ENCODE measurements at regions of chr2 and their contacts with region 1.

Region 1: GRCh38 chr2:157492189-157492773 is 48.4 kb upstream of the CYTIP start:
- DNase-seq: peak; percentile 81
- ATAC-seq: peak; percentile 96
- H3K4me3 ChIP-seq: no peak overlapping the region
- H3K4me3 Mint-ChIP-seq: no peak overlapping the region
- H3K27ac ChIP-seq: no peak overlapping the region
- H3K27ac Mint-ChIP-seq: no peak overlapping the region
- H3K4me1 ChIP-seq: peaks cover 6 to 14% of the 10 kb centered on the region in 2 donors
- H3K4me1 Mint-ChIP-seq: peaks cover 20% of the 10 kb centered on the region
- H3K27me3 ChIP-seq: no peaks in the 10 kb centered on the region
- H3K27me3 Mint-ChIP-seq: no peaks in the 10 kb centered on the region
- CTCF ChIP-seq: peak; percentile 91

Region 2: DNA sequence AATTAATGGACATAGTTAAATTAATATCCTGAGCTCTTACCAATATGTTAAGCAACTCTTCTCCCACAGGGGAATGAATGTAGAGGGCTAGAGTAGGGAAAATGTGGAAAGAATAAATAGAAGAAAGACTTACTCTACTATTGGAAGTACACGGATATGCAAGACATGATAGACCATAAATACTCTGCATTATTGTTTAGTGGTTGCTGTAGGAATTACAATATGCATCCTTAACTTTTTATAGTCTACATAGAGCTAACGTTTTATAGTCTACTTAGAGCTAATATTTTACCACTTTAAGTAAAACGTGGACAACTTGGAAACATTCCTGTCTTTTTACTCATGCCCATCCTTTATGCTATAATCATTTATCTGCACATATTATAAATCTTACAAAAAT is 398.6 kb before region 1 on chr2:
- CTCF ChIA-PET with region 1: no interaction called
- POLR2A ChIA-PET with region 1: no interaction called
- intact Hi-C with region 1: no loop called
- DNase-seq: no peak
- ATAC-seq: no peak
- H3K4me3 ChIP-seq: no peak overlapping the region
- H3K4me3 Mint-ChIP-seq: no peak overlapping the region
- H3K27ac ChIP-seq: no peak overlapping the region
- H3K27ac Mint-ChIP-seq: no peak overlapping the region
- H3K4me1 ChIP-seq: no peaks in the 10 kb centered on the region
- H3K4me1 Mint-ChIP-seq: no peaks in the 10 kb centered on the region
- H3K27me3 ChIP-seq: no peaks in the 10 kb centered on the region
- H3K27me3 Mint-ChIP-seq: no peaks in the 10 kb centered on the region
- CTCF ChIP-seq: no peak

Region 3: GRCh38 chr2:157443795-157444640 is 48.3 kb before region 1 on chr2 and contains the start of gene CYTIP:
- CTCF ChIA-PET with region 1: interaction called, 17 read pairs
- POLR2A ChIA-PET with region 1: interaction called, 4 read pairs
- intact Hi-C with region 1: loop called (anchors 1 kb)
- DNase-seq: peak; percentile 88
- ATAC-seq: peak; percentile 58
- H3K4me3 ChIP-seq: peak within 1 kb of the TSS; percentile 82 to 98 (median 92)
- H3K4me3 Mint-ChIP-seq: peak within 1 kb of the TSS; percentile 94
- H3K27ac ChIP-seq: peak within 1 kb of the TSS; percentile 93 to 96
- H3K27ac Mint-ChIP-seq: peak within 1 kb of the TSS; percentile 95
- H3K4me1 ChIP-seq: peaks cover 40 to 43% of the 10 kb centered on the region in 2 donors
- H3K4me1 Mint-ChIP-seq: peaks cover 39% of the 10 kb centered on the region
- H3K27me3 ChIP-seq: no peaks in the 10 kb centered on the region
- H3K27me3 Mint-ChIP-seq: no peaks in the 10 kb centered on the region
- CTCF ChIP-seq: no peak
- total RNA-seq, gene CYTIP: 327 and 358 TPM in 2 replicates

Region 4: GRCh38 chr2:157559061-157559460 is 66.8 kb after region 1 on chr2:
- CTCF ChIA-PET with region 1: no interaction called
- POLR2A ChIA-PET with region 1: no interaction called
- intact Hi-C with region 1: no loop called
- DNase-seq: no peak
- ATAC-seq: no peak
- H3K4me3 ChIP-seq: no peak overlapping the region
- H3K4me3 Mint-ChIP-seq: no peak overlapping the region
- H3K27ac ChIP-seq: no peak overlapping the region
- H3K27ac Mint-ChIP-seq: no peak overlapping the region
- H3K4me1 ChIP-seq: no peaks in the 10 kb centered on the region
- H3K4me1 Mint-ChIP-seq: peaks cover 10% of the 10 kb centered on the region
- H3K27me3 ChIP-seq: no peaks in the 10 kb centered on the region
- H3K27me3 Mint-ChIP-seq: peaks cover 9% of the 10 kb centered on the region
- CTCF ChIP-seq: no peak

Region 5: DNA sequence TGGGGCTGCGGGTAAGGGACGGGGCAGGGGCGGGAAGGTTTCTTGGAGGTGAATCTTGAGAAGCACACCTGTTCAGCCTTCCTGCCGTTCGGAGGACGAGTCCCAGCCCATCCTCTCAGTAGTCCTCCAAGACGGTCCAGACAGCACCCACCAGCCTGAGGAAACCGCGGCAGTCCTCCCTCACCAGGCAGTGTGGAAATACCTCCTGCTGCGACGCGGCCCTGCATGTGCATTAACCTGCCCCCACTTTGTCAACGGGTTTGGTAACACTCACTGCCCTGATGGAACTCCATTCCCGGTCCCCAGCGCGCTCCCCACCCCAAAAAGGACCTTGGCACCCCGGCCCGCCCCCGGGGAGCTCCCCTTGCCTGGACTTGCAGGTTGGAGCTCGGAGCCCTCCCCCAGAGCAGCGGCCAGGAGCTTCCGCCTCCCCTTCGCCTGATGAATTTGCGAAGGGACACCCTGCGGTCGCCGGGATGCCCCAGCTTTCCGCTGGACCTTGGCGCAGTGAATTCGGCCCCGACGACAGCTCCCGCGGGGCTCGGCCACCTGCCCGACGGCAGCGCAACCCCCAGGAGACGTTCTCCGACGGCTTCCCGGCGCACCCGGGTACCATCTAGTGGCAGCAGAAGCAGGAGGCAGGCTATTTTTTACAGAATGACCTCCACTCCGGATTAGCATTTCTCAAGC is 104.9 kb after region 1 on chr2:
- CTCF ChIA-PET with region 1: interaction called, 105 read pairs
- POLR2A ChIA-PET with region 1: no interaction called
- intact Hi-C with region 1: loop called (anchors 1 kb)
- DNase-seq: peak; percentile 67
- ATAC-seq: peak; percentile 84
- H3K4me3 ChIP-seq: peak overlapping the region in 3 of 5 experiments; percentile 6 to 42 (median 27)
- H3K4me3 Mint-ChIP-seq: peak overlapping the region; percentile 66
- H3K27ac ChIP-seq: no peak overlapping the region
- H3K27ac Mint-ChIP-seq: no peak overlapping the region
- H3K4me1 ChIP-seq: peaks cover 0 to 4% of the 10 kb centered on the region in 2 donors
- H3K4me1 Mint-ChIP-seq: peaks cover 7% of the 10 kb centered on the region
- H3K27me3 ChIP-seq: peaks cover 0 to 8% (median 2%) of the 10 kb centered on the region in 4 experiments
- H3K27me3 Mint-ChIP-seq: peaks cover 16% of the 10 kb centered on the region
- CTCF ChIP-seq: peak; percentile 75

Region 6: GRCh38 chr2:157876066-157876787 is 383.9 kb after region 1 on chr2 and contains the start of gene ACVR1:
- CTCF ChIA-PET with region 1: interaction called, 4 read pairs
- POLR2A ChIA-PET with region 1: no interaction called
- intact Hi-C with region 1: loop called (anchors 2 kb)
- DNase-seq: peak; percentile 85
- ATAC-seq: peak; percentile 77
- H3K4me3 ChIP-seq: peak within 1 kb of the TSS; percentile 56 to 81 (median 75)
- H3K4me3 Mint-ChIP-seq: peak within 1 kb of the TSS; percentile 95
- H3K27ac ChIP-seq: peak within 1 kb of the TSS; percentile 30 to 68
- H3K27ac Mint-ChIP-seq: peak within 1 kb of the TSS; percentile 91
- H3K4me1 ChIP-seq: peaks cover 14 to 20% of the 10 kb centered on the region in 2 donors
- H3K4me1 Mint-ChIP-seq: peaks cover 24% of the 10 kb centered on the region
- H3K27me3 ChIP-seq: no peaks in the 10 kb centered on the region
- H3K27me3 Mint-ChIP-seq: no peaks in the 10 kb centered on the region
- CTCF ChIP-seq: peak; percentile 45
- total RNA-seq, gene ACVR1: 11.3 and 11.7 TPM in 2 replicates

Region 7: DNA sequence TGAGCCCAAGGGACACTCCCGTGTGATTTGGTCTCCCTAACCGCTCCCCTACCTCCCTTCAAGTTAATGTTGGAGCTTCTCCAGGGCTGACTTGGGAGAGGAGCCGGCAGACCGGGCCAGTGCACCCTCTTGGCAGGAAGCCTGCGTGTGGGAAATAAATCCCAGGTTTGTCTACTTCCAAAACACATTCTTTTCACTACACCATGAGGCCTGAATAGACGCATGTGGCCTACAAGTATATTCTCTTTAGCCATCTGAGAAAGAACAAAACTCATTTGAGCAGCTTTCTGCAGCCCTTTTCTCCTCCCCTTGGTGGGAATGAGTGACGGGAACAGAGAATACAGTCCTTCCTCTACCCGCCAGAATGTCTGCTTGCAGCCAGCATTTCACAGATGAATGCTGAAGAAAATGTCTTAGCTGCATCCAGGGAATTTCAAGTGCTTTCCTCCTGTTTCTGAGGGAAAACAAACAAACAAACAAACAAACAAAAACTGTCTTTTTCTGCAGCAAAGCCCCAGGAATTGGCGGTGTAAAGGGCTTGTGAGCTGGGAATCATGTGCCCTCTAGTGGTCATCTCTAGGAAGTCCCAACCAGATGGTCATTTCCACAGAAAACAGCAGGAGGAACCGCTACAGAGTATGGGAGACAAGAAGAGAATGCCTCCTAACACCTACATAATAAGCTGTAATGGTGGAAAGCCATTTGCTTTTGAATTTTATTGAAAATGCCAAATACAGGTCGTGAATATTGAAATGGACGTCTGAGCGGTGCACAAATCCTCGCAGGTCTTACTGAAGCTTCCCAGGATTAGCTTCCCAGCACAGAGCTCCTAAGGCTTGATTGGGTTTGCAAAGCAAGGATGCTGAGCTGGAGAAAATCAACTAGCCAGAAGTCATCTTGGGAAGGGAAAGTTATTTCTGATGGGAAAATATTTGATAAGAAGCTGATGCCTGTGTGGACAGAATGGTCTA is 1261.6 kb after region 1 on chr2:
- CTCF ChIA-PET with region 1: interaction called, 4 read pairs
- POLR2A ChIA-PET with region 1: no interaction called
- intact Hi-C with region 1: loop called (anchors 10 kb)
- DNase-seq: peak; percentile 61
- ATAC-seq: peak; percentile 62
- H3K4me3 ChIP-seq: no peak overlapping the region
- H3K4me3 Mint-ChIP-seq: no peak overlapping the region
- H3K27ac ChIP-seq: no peak overlapping the region
- H3K27ac Mint-ChIP-seq: no peak overlapping the region
- H3K4me1 ChIP-seq: no peaks in the 10 kb centered on the region
- H3K4me1 Mint-ChIP-seq: no peaks in the 10 kb centered on the region
- H3K27me3 ChIP-seq: peaks cover 0 to 7% (median 1%) of the 10 kb centered on the region in 4 experiments
- H3K27me3 Mint-ChIP-seq: peaks cover 20% of the 10 kb centered on the region
- CTCF ChIP-seq: peak; percentile 93

Measured in B cell (primary cell).